ENCODE measurements at regions of chr1 and their contacts with region 1.

Region 1: GRCh38 chr1:212284744-212285684 is at the start of gene PPP2R5A:
- DNase-seq: peak; percentile 99 to 100 (median 99)
- ATAC-seq: peak; percentile 95 to 99 (median 98)
- H3K4me3 ChIP-seq: peak within 1 kb of the TSS; percentile 79 to 98 (median 92)
- H3K27ac ChIP-seq: peak within 1 kb of the TSS; percentile 95 to 100 (median 99)
- H3K4me1 ChIP-seq: peaks cover 0 to 40% (median 21%) of the 10 kb centered on the region in 12 donors
- H3K27me3 ChIP-seq: no peaks in the 10 kb centered on the region
- CTCF ChIP-seq: peak in 5 of 12 donors; percentile 17 to 48 (median 39)
- POLR2A ChIP-seq: peak; percentile 59 to 97
- total RNA-seq, gene PPP2R5A: 52.0 to 102 (median 63.5) TPM

Region 2: DNA sequence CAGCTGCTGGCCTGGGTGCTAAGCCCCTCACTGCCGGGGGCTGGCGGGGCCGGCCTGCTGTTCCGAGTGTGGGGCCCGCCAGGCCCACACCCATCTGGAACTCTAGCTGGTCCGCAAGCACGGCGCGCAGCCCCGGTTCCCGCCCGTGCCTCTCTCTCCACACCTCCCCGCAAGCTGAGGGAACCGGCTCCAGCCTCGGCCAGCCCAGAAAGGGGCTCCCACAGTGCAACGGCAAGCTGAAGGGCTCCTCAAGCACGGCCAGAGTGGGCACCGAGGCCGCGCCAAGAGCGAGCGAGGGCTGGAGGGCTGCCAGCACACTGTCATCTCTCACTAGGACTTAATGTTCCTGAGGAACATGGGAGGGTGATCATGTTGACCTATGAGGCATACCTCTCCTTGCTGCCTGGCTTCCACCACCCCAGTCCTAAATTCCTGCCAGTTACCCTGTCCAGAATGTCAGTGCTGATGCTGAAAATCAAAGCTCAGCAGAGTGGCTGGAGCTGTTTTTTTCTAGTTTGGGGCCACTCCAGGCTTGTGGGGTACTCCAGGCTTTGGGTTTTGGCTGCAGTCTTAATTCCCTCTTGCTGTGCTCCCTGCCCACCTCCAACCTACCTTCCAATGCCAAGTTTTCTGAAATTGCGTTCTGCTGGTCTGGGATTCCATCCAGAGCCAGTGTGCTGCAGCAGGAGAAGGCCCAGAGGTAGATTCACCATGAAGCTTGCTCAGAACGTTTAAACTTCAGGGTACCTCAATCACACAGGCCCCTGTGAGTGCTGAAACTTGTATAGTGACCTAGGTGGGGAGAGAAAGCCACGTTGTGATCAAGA is 410.3 kb before region 1 on chr1:
- intact Hi-C with region 1: no loop called
- DNase-seq: peak in 1 of 5 donors; percentile 31
- ATAC-seq: peak; percentile 49 to 75 (median 58)
- H3K4me3 ChIP-seq: no peak overlapping the region
- H3K27ac ChIP-seq: no peak overlapping the region
- H3K4me1 ChIP-seq: no peaks in the 10 kb centered on the region
- H3K27me3 ChIP-seq: peaks cover 0 to 4% (median 0%) of the 10 kb centered on the region in 9 donors
- CTCF ChIP-seq: no peak
- POLR2A ChIP-seq: no peak

Region 3: GRCh38 chr1:212070720-212071302 is 214.2 kb before region 1 on chr1:
- intact Hi-C with region 1: loop called in 9 of 10 experiments (anchors 1 to 5 kb)
- DNase-seq: no peak
- ATAC-seq: peak in 3 of 4 donors; percentile 48 to 61 (median 57)
- H3K4me3 ChIP-seq: no peak overlapping the region
- H3K27ac ChIP-seq: peak overlapping the region in 2 of 12 donors; percentile 2 to 33
- H3K4me1 ChIP-seq: peaks cover 0 to 12% (median 0%) of the 10 kb centered on the region in 12 donors
- H3K27me3 ChIP-seq: no peaks in the 10 kb centered on the region
- CTCF ChIP-seq: peak; percentile 69 to 89 (median 80)
- POLR2A ChIP-seq: no peak

Region 4: GRCh38 chr1:212089560-212090163 is 195.4 kb before region 1 on chr1:
- intact Hi-C with region 1: loop called in 1 of 10 experiments (anchors 5 kb)
- DNase-seq: no peak
- ATAC-seq: no peak
- H3K4me3 ChIP-seq: no peak overlapping the region
- H3K27ac ChIP-seq: peak overlapping the region in 5 of 12 donors; percentile 11 to 78 (median 21)
- H3K4me1 ChIP-seq: peaks cover 0 to 34% (median 10%) of the 10 kb centered on the region in 12 donors
- H3K27me3 ChIP-seq: no peaks in the 10 kb centered on the region
- CTCF ChIP-seq: no peak
- POLR2A ChIP-seq: no peak

Region 5: DNA sequence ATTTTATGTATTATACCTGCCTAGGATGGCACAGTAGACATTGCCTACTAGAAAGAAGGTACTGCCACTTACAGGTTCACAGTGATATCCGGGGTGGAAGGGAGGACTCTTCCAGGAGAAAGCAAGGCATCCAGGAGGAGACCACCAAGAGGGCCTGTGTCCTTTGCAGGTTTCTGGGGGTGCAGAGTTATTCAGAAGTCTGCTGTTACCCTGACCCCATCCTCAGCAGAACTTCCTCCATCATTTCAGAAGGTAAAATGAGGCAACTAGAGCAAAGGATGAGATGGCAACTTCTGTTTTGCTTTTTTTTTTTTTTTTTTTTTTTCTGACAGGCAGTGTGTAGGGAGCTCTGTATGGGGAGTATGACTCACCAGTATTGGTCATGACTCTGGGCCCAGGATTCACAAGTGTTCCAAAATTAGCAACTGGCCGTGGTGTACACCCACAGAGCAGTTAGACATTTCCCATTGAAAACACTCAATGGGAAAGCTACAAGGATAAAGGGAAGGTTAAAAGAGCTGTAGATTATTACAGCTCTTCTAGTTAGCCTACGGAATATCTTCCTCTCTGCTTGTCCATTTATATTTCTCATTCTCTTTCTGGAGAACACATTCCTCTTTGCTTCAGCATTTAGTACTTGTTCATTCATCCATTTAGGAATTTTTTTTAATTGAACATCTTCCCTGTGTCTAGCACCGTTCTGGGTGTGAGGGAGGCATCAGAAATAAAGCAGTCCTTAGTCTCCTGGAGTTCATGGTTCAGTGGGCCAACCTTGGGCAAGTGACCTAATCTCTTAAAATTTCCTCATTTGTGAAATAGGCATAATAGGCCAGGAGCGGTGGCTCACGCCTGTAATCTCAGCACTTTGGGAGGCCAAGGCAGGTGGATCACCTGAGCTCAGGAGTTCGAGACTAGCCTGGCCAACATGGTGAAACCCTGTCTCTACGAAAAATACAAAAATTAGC is 50.3 kb before region 1 on chr1:
- intact Hi-C with region 1: loop called in 4 of 10 experiments (anchors 2 to 5 kb)
- DNase-seq: peak in 4 of 5 donors; percentile 59 to 82 (median 64)
- ATAC-seq: peak; percentile 96 to 98 (median 98)
- H3K4me3 ChIP-seq: no peak overlapping the region
- H3K27ac ChIP-seq: peak overlapping the region in 11 of 12 donors; percentile 53 to 88 (median 80)
- H3K4me1 ChIP-seq: peaks cover 3 to 57% (median 29%) of the 10 kb centered on the region in 12 donors
- H3K27me3 ChIP-seq: no peaks in the 10 kb centered on the region
- CTCF ChIP-seq: no peak
- POLR2A ChIP-seq: no peak

Region 6: DNA sequence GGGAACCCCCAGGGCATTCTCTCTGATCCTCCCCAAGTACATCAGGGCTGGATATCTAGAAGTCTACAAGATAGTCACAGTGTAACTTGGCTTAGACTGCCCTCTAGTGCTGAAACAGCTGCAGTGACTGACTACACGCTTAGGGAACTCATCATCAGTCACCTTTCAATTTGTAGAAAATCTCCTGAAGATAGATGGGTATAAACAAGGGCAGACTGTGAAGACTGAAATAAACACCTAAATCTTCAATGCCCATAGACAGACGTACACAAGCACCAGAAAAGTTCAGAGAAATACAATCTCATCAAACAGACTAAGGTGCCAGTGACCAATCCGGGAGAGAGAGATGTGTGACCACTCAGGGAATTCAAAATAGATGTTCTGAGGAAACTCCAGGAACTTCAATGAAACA is 83.1 kb after region 1 on chr1:
- intact Hi-C with region 1: loop called in 7 of 10 experiments (anchors 5 to 10 kb)
- DNase-seq: peak in 3 of 5 donors; percentile 33 to 51 (median 35)
- ATAC-seq: peak; percentile 45 to 88 (median 84)
- H3K4me3 ChIP-seq: no peak overlapping the region
- H3K27ac ChIP-seq: peak overlapping the region in 1 of 12 donors; percentile 2
- H3K4me1 ChIP-seq: peaks cover 0 to 23% (median 1%) of the 10 kb centered on the region in 12 donors
- H3K27me3 ChIP-seq: no peaks in the 10 kb centered on the region
- CTCF ChIP-seq: peak; percentile 76 to 91 (median 83)
- POLR2A ChIP-seq: no peak

Measured in heart left ventricle (tissue), 16 donors.